ACHN (cell line): ENCODE measurements at regions of chr2 and their contacts with region 1.

Region 1: GRCh38 chr2:191165176-191165643 is 14.4 kb upstream of the STAT4 start:
- DNase-seq: peak; percentile 69

Region 2: GRCh38 chr2:191521608-191522208 is 356.5 kb after region 1 on chr2:
- in situ Hi-C with region 1: loop called (anchors 25 kb)
- DNase-seq: peak; percentile 62